Activated naive CD4-positive, alpha-beta T cell treated with anti-CD3 and anti-CD28 coated beads for 36 hours (primary cell): ENCODE measurements at regions of chr12 and their contacts with region 1.

Region 1: GRCh38 chr12:42097971-42098370 is 46.7 kb downstream of the GXYLT1 start:
- DNase-seq: peak; percentile 23
- H3K4me3 Mint-ChIP-seq: peak overlapping the region; percentile 75
- H3K27ac Mint-ChIP-seq: peak overlapping the region; percentile 77
- H3K4me1 Mint-ChIP-seq: peaks cover 31% of the 10 kb centered on the region
- H3K27me3 Mint-ChIP-seq: no peaks in the 10 kb centered on the region

Region 2: DNA sequence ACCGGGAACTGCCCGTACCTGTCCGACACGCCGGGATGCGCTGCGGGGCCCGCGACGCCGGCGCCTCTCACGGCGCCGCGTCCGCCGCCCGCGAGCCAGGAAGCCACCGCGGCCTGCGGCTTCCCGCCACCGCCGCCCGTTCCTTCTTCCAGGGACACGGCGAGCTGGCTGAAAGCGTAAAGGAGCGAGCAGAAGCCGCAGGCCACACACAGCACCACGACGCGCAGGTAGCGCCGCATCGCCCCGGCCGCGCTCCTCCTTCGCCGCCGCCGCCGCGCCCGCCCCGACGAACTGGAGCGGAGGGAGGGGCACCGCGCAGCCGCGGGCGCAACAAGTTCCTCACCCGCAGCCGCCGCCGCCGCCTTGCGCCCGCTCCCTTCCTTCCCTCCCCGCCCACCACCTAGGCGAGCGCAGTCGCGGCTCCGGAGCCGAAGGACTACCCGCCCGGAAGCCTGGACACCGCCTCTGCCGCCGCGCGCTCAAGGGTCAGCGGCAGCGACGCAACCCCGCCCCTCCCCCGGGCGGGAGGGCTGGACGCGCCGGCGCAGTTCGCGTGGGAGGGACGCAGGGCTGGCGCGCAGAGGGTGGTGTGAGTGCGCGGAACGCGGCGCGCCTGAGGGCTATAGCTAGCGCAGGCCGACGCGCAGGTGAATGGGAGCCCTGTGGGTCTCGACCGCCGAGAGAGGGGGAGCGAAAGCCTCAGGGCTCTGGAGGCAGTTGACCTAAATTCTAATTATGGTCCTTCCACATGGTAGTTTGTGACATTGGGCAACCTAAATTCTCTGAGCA is 46.6 kb after region 1 on chr12 and contains the start of gene GXYLT1:
- CTCF ChIA-PET with region 1: interaction called, 3 read pairs
- intact Hi-C with region 1: loop called (anchors 1 kb)
- DNase-seq: peak; percentile 78
- H3K4me3 Mint-ChIP-seq: peak within 1 kb of the TSS; percentile 90
- H3K27ac Mint-ChIP-seq: peak within 1 kb of the TSS; percentile 75
- H3K4me1 Mint-ChIP-seq: peaks cover 28% of the 10 kb centered on the region
- H3K27me3 Mint-ChIP-seq: no peaks in the 10 kb centered on the region
- total RNA-seq, gene GXYLT1: 4.6 to 5.1 TPM

Region 3: DNA sequence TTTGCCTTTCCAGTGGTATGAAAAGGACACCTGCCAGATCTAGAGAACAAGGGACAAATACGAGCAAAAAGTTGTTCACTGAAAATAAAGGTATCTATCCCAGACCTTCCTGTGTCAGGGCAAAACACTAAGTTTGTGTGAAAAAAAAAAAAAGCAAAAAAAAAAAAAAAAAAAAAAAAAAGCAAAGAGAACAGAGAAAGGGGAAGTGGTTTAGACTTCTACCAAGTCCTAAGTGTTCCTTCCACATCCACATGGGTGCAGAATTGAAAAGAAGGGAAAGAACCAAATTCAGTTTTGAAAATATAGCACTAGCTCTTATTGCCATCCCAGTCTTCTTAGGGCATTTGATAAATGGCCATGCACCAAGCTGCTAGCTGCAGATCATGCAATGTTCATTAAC is 186.2 kb after region 1 on chr12:
- CTCF ChIA-PET with region 1: no interaction called
- intact Hi-C with region 1: no loop called
- DNase-seq: no peak
- H3K4me3 Mint-ChIP-seq: no peak overlapping the region
- H3K27ac Mint-ChIP-seq: no peak overlapping the region
- H3K4me1 Mint-ChIP-seq: peaks cover 2% of the 10 kb centered on the region
- H3K27me3 Mint-ChIP-seq: no peaks in the 10 kb centered on the region

Region 4: GRCh38 chr12:42574851-42575266 is 476.9 kb after region 1 on chr12:
- CTCF ChIA-PET with region 1: no interaction called
- intact Hi-C with region 1: no loop called
- DNase-seq: no peak
- H3K4me3 Mint-ChIP-seq: no peak overlapping the region
- H3K27ac Mint-ChIP-seq: no peak overlapping the region
- H3K4me1 Mint-ChIP-seq: no peaks in the 10 kb centered on the region
- H3K27me3 Mint-ChIP-seq: peaks cover 2% of the 10 kb centered on the region